ENCODE measurements at regions of chr1 and their contacts with region 1.

Region 1: DNA sequence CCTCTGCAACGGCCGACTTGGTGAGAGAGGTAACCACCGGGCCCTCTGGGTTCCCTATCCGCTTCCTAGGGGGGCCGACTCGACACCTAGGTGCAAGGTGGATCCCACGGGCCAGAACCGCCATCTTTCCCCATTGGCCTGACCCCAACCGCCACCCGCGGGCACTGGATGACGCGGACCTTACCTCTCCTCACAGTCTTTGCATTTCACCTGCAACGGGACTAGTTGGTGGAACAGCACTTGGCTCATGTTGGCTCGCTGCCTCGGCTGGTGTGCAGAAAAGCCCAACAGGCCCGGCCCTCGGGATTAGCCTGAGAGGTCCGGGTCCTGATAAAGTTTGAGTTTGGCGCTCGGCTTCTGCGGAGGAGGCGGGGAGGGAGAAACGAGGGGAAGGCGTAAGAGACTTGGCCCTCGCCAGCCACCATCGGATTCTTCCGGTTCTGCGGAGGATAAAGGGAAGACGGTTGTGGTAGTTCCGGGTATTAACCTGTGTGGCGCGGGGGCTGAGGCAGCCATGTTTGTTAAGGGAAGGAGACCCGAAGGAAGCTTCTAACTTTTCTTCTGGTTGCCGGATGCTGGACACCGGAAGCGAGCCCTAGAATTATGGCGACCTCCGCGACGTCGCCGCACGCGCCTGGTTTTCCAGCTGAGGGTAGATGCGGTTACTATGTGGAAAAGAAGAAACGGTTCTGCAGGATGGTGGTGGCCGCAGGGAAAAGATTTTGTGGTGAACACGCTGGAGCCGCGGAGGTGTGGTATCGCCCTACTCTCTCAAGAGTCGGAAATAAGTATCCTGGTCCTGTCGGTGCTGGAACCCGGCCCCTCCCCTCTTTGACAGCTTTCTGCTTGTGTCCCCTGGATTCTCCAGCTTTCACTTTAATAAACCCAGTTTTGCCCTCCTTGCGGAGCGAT is at the starts of genes SASS6 and TRMT13:
- DNase-seq: peak; percentile 98
- ATAC-seq: peak; percentile 100
- total RNA-seq, gene SASS6: 2.2 TPM
- total RNA-seq, gene TRMT13: 6.6 TPM

Region 2: GRCh38 chr1:99919220-99919619 is 213.6 kb before region 1 on chr1:
- intact Hi-C with region 1: loop called (anchors 10 kb)
- DNase-seq: no peak
- ATAC-seq: peak; percentile 41

Region 3: DNA sequence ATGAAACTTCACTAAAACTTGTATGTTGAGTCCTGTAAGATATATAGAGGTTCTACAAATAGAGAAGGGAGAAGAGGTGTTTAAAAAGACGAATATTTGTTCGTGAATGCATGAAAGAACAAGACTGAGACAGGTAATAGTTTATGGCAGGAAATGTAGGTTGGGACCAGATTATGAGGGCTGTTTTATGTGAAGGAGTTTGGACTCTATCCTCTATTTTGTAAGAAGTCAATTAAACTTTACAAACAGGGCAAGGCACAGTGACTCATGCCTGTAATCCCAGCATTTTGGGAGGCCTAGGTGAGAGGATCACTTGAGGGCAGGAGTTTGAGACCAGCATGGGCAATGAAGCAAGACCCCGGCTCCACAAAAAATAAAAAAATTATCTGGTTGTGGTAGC is 157.3 kb before region 1 on chr1:
- intact Hi-C with region 1: no loop called
- DNase-seq: no peak
- ATAC-seq: no peak

Region 4: GRCh38 chr1:100061681-100062080 is 71.1 kb before region 1 on chr1:
- intact Hi-C with region 1: no loop called
- DNase-seq: no peak
- ATAC-seq: no peak

Region 5: DNA sequence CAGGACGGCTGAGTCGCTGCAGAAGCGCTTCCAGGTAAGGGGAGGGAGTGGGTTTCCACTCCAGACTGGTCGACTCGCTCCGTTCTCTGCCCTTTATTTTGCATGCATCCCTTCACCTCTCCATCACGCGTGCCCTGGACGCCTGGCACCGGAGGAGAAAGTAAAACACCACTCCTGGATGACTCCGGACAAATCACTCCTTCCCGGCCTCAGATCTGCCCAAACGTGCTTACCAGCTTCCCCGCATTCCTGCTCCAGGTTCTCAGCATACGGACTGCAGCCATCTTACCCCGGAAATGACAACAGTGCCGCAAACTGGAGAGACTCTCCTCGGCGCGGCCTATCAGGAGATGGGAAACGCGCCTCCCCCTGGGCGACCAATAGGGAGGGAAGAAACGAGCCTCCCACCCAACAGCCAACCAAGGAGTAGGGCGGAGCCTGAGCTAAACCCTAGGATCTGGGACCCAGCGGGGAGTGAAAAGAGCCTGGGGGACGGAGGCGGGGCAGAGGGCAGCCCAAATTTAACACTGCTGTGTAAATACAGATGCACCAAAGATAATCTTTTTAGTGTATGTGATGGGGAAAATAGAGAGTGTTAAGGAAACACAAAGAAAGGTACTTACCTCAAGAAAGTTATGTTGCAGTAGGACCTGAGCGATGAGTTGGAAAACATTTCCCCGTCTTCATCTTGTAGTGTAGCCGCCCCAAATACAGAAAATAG is 116.9 kb after region 1 on chr1 and contains the start of gene DBT:
- intact Hi-C with region 1: no loop called
- DNase-seq: peak; percentile 95
- ATAC-seq: peak; percentile 100
- total RNA-seq, gene DBT: 30.6 TPM

Region 6: GRCh38 chr1:100265931-100266740 is 133.3 kb after region 1 on chr1 and contains the start of gene RTCA:
- intact Hi-C with region 1: loop called (anchors 5 kb)
- DNase-seq: peak; percentile 100
- ATAC-seq: peak; percentile 99
- total RNA-seq, gene RTCA: 46.2 TPM

Region 7: GRCh38 chr1:100895540-100896483 is 763.0 kb after region 1 on chr1 and contains the start of gene SLC30A7:
- intact Hi-C with region 1: loop called (anchors 10 kb)
- DNase-seq: peak; percentile 99
- ATAC-seq: peak; percentile 97
- total RNA-seq, gene SLC30A7: 5.5 TPM

Measured in Right ventricle myocardium inferior (tissue), 1 donor.